Astrocyte of the cerebellum (primary cell): ENCODE measurements at regions of chr4 and their contacts with region 1.

Region 1: GRCh38 chr4:104064646-104065577 is 345.1 kb upstream of the TACR3 start:
- DNase-seq: peak; percentile 37
- H3K4me3 ChIP-seq: no peak overlapping the region
- CTCF ChIP-seq: peak; percentile 75

Region 2: GRCh38 chr4:104860238-104861123 is 795.6 kb after region 1 on chr4:
- in situ Hi-C with region 1: loop called (anchors 25 kb)
- DNase-seq: peak; percentile 77
- H3K4me3 ChIP-seq: no peak overlapping the region
- CTCF ChIP-seq: peak; percentile 84